ENCODE measurements at regions of chr15 and their contacts with region 1.

Region 1: GRCh38 chr15:52679232-52680040 is at the start of gene ATOSA:
- DNase-seq: peak; percentile 88
- H3K4me3 Mint-ChIP-seq: peak within 1 kb of the TSS; percentile 98
- H3K27ac Mint-ChIP-seq: peak within 1 kb of the TSS; percentile 94
- H3K4me1 Mint-ChIP-seq: peaks cover 5% of the 10 kb centered on the region
- H3K27me3 Mint-ChIP-seq: no peaks in the 10 kb centered on the region
- CTCF ChIP-seq: no peak
- total RNA-seq, gene ATOSA: 21.3 and 27.6 TPM in 2 replicates

Region 2: GRCh38 chr15:52331490-52332240 is 347.8 kb before region 1 on chr15:
- CTCF ChIA-PET with region 1: interaction called, 3 read pairs
- POLR2A ChIA-PET with region 1: interaction called, 3 read pairs
- intact Hi-C with region 1: loop called (anchors 1 kb)
- DNase-seq: peak; percentile 62
- H3K4me3 Mint-ChIP-seq: no peak overlapping the region
- H3K27ac Mint-ChIP-seq: peak overlapping the region; percentile 57
- H3K4me1 Mint-ChIP-seq: peaks cover 21% of the 10 kb centered on the region
- H3K27me3 Mint-ChIP-seq: no peaks in the 10 kb centered on the region
- CTCF ChIP-seq: peak; percentile 46

Region 3: GRCh38 chr15:52496776-52497470 is 182.5 kb before region 1 on chr15:
- CTCF ChIA-PET with region 1: no interaction called
- POLR2A ChIA-PET with region 1: no interaction called
- intact Hi-C with region 1: no loop called
- DNase-seq: peak; percentile 26
- H3K4me3 Mint-ChIP-seq: no peak overlapping the region
- H3K27ac Mint-ChIP-seq: no peak overlapping the region
- H3K4me1 Mint-ChIP-seq: peaks cover 5% of the 10 kb centered on the region
- H3K27me3 Mint-ChIP-seq: no peaks in the 10 kb centered on the region
- CTCF ChIP-seq: no peak

Region 4: GRCh38 chr15:52568601-52569256 is 110.7 kb before region 1 on chr15 and contains the start of gene ARPP19:
- CTCF ChIA-PET with region 1: no interaction called
- POLR2A ChIA-PET with region 1: interaction called, 4 read pairs
- intact Hi-C with region 1: loop called (anchors 5 kb)
- DNase-seq: peak; percentile 96
- H3K4me3 Mint-ChIP-seq: peak within 1 kb of the TSS; percentile 77
- H3K27ac Mint-ChIP-seq: peak within 1 kb of the TSS; percentile 85
- H3K4me1 Mint-ChIP-seq: peaks cover 5% of the 10 kb centered on the region
- H3K27me3 Mint-ChIP-seq: no peaks in the 10 kb centered on the region
- CTCF ChIP-seq: no peak
- total RNA-seq, gene ARPP19: 172 and 213 TPM in 2 replicates

Region 5: GRCh38 chr15:52658955-52659354 is 20.5 kb before region 1 on chr15:
- CTCF ChIA-PET with region 1: interaction called, 9 read pairs
- POLR2A ChIA-PET with region 1: interaction called, 55 read pairs
- intact Hi-C with region 1: no loop called
- DNase-seq: no peak
- H3K4me3 Mint-ChIP-seq: no peak overlapping the region
- H3K27ac Mint-ChIP-seq: no peak overlapping the region
- H3K4me1 Mint-ChIP-seq: peaks cover 21% of the 10 kb centered on the region
- H3K27me3 Mint-ChIP-seq: no peaks in the 10 kb centered on the region
- CTCF ChIP-seq: no peak

Region 6: GRCh38 chr15:52730173-52730572 is 50.7 kb after region 1 on chr15:
- CTCF ChIA-PET with region 1: interaction called, 7 read pairs
- POLR2A ChIA-PET with region 1: interaction called, 80 read pairs
- intact Hi-C with region 1: loop called (anchors 1 kb)
- DNase-seq: peak; percentile 66
- H3K4me3 Mint-ChIP-seq: no peak overlapping the region
- H3K27ac Mint-ChIP-seq: peak overlapping the region; percentile 49
- H3K4me1 Mint-ChIP-seq: peaks cover 13% of the 10 kb centered on the region
- H3K27me3 Mint-ChIP-seq: no peaks in the 10 kb centered on the region
- CTCF ChIP-seq: no peak